Activated T-helper 2 cell treated with anti-CD3 and anti-CD28 coated beads, Interferon-gamma antibody, Interleukin-2, Interleukin-4, amounts not matched to agents 10 μg/mL and 5 μg/mL and 100 μg/mL, durations not matched to agents 14 hours and 24 hours and 36 hours (primary cell): ENCODE measurements at regions of chr7 and their contacts with region 1.

Region 1: GRCh38 chr7:584122-584465 is 64.4 kb upstream of the PDGFA start:
- DNase-seq: peak; percentile 88
- H3K4me3 Mint-ChIP-seq: peak overlapping the region; percentile 85
- H3K27ac Mint-ChIP-seq: peak overlapping the region; percentile 95
- H3K4me1 Mint-ChIP-seq: peaks cover 33% of the 10 kb centered on the region
- H3K27me3 Mint-ChIP-seq: no peaks in the 10 kb centered on the region

Region 2: DNA sequence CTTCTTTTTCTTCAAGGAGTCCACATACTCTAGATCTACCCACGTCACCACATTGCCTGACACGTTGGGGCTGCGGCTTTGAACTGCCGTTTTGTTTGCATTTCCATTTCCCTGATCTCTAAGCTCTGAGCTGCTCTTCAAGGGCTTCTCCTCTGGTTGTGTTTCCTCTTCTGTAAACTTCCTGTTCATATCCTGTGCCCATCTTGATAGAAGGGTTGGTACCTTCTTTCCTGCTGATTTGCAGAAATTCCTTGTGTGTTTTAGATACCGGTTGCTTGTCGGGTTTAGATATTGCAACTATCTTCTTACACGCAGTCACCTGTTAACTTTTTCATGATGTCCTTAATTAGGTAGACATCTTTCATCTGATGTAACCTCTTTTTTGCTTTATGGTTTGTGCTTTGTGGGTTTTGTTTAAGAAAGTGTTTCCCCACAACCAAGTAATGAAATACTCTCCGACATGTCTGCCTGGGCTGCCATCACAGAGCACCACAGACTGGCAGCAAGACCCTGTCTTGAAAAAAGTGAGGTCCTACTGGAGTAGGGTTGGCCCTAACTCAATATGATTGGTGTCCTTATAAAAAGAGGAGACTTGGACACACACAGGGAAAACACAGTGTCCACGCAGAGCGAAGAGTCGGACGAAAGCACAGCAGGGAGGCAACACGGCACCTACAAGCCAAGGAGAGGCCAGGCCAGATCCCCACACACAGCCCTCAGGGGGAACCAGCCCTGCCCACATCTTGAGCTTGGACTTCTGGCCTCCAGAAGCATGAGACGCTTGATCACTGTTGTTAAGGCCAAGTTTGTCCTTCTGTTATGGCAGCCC is 34.7 kb after region 1 on chr7:
- intact Hi-C with region 1: loop called (anchors 1 kb)
- DNase-seq: peak; percentile 70
- H3K4me3 Mint-ChIP-seq: peak overlapping the region; percentile 83
- H3K27ac Mint-ChIP-seq: peak overlapping the region; percentile 99
- H3K4me1 Mint-ChIP-seq: peaks cover 40% of the 10 kb centered on the region
- H3K27me3 Mint-ChIP-seq: no peaks in the 10 kb centered on the region

Region 3: DNA sequence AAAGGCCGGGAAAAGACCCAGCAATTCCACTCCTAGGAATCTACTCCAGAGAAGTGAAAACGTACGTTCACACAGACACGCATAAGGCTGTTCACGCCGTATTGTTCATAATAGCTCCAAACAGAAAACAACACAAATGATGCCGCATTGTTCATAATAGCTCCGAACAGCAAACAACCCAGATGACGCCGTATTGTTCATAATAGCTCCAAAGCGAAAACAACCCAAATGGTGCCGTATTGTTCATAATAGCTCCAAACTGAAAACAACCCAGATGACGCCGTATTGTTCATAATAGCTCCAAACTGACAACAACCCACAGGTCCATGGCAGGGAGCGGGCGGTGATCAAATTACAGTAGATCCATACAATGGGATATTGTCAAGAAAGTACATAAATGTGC is 57.2 kb after region 1 on chr7:
- intact Hi-C with region 1: no loop called
- DNase-seq: no peak
- H3K4me3 Mint-ChIP-seq: no peak overlapping the region
- H3K27ac Mint-ChIP-seq: no peak overlapping the region
- H3K4me1 Mint-ChIP-seq: peaks cover 7% of the 10 kb centered on the region
- H3K27me3 Mint-ChIP-seq: no peaks in the 10 kb centered on the region

Region 4: DNA sequence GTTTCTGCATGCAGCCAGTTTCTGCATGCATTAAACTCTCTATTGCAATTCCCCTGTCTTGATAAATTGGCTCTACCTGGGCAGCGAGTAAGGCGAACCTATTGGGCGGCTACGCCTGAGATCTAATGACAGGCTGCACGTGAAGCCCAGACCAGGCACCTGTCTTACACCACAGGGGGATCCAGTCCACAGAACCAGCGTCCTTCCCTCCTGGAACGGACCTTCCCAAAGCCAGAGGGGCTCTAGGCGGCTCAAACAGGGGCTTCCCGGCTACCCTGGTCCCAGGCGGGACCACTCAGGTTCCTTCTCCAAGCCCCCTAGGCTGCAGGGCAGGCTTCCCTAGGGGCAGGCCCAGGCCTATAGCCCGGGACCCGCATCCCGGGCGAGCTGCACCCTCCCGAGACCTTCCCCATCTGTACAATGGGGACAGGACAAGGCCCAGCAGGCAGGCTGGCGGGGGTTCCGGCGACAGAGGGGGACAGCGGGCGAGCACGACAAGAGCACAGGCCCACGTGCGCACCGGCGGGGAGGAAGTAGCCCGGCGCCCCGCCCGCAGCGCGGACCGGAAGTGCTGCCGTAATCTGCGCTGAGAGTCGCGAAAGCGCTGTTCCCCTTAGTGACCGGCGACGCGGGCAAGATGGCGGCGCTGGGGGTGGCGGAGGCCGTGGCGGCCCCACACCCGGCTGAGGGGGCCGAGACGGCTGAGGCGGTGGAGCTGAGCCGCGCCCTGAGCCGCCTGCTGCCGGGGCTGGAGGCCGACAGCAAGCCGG is 142.2 kb after region 1 on chr7 and contains the start of gene DNAAF5:
- intact Hi-C with region 1: loop called (anchors 1 kb)
- DNase-seq: peak; percentile 85
- H3K4me3 Mint-ChIP-seq: peak within 1 kb of the TSS; percentile 92
- H3K27ac Mint-ChIP-seq: peak within 1 kb of the TSS; percentile 91
- H3K4me1 Mint-ChIP-seq: peaks cover 17% of the 10 kb centered on the region
- H3K27me3 Mint-ChIP-seq: no peaks in the 10 kb centered on the region
- total RNA-seq, gene DNAAF5: 41.5 and 41.7 TPM in 2 replicates